ENCODE measurements at regions of chr12 and their contacts with region 1.

Region 1: GRCh38 chr12:65823513-65824375 is 539 bp upstream of the HMGA2 start:
- DNase-seq: peak; percentile 60
- H3K4me3 ChIP-seq: peak overlapping the region; percentile 58 to 97 (median 71)
- H3K27ac ChIP-seq: peak overlapping the region; percentile 71
- H3K4me1 ChIP-seq: peaks cover 31% of the 10 kb centered on the region
- H3K27me3 ChIP-seq: no peaks in the 10 kb centered on the region
- CTCF ChIP-seq: no peak
- POLR2A ChIP-seq: no peak

Region 2: GRCh38 chr12:65536876-65537661 is 286.7 kb before region 1 on chr12:
- CTCF ChIA-PET with region 1: no interaction called
- POLR2A ChIA-PET with region 1: no interaction called
- dilution Hi-C with region 1: no loop called
- intact Hi-C with region 1: loop called (anchors 2 kb)
- DNase-seq: peak; percentile 94
- H3K4me3 ChIP-seq: no peak overlapping the region
- H3K27ac ChIP-seq: peak overlapping the region; percentile 98
- H3K4me1 ChIP-seq: peaks cover 58% of the 10 kb centered on the region
- H3K27me3 ChIP-seq: no peaks in the 10 kb centered on the region
- CTCF ChIP-seq: no peak
- POLR2A ChIP-seq: peak; percentile 45

Region 3: GRCh38 chr12:65695113-65695865 is 128.5 kb before region 1 on chr12:
- CTCF ChIA-PET with region 1: no interaction called
- POLR2A ChIA-PET with region 1: no interaction called
- dilution Hi-C with region 1: no loop called
- intact Hi-C with region 1: loop called (anchors 2 kb)
- DNase-seq: peak; percentile 94
- H3K4me3 ChIP-seq: no peak overlapping the region
- H3K27ac ChIP-seq: peak overlapping the region; percentile 88
- H3K4me1 ChIP-seq: peaks cover 31% of the 10 kb centered on the region
- H3K27me3 ChIP-seq: no peaks in the 10 kb centered on the region
- CTCF ChIP-seq: no peak
- POLR2A ChIP-seq: peak; percentile 35

Region 4: DNA sequence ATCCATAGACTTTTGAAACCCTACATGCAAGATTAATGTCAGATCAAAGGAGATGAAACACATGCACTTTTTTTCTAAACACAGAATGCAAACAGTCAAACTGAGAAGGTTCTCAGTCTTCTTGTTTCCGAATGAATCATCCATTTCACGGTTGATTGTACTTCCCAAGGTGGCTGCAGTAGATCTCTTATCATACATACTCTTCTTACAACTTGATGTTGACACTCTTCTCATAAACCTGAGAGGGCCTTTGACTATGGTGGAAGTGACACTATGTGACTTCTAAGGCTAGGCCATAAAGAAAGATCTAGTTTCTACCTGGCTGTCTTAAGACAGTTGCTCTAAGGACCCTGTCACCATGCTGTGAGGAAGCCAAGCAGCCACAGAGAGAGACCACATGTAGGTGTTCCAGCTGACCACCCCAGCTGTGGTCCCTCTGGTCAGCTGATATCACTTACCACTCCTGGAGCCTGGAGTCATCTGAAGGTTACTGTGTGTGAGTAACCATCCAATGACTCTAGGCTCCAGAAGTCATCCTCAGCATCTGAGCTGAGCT is 66.7 kb before region 1 on chr12:
- CTCF ChIA-PET with region 1: no interaction called
- POLR2A ChIA-PET with region 1: no interaction called
- dilution Hi-C with region 1: no loop called
- intact Hi-C with region 1: no loop called
- DNase-seq: no peak
- H3K4me3 ChIP-seq: no peak overlapping the region
- H3K27ac ChIP-seq: no peak overlapping the region
- H3K4me1 ChIP-seq: no peaks in the 10 kb centered on the region
- H3K27me3 ChIP-seq: no peaks in the 10 kb centered on the region
- CTCF ChIP-seq: no peak
- POLR2A ChIP-seq: no peak

Region 5: DNA sequence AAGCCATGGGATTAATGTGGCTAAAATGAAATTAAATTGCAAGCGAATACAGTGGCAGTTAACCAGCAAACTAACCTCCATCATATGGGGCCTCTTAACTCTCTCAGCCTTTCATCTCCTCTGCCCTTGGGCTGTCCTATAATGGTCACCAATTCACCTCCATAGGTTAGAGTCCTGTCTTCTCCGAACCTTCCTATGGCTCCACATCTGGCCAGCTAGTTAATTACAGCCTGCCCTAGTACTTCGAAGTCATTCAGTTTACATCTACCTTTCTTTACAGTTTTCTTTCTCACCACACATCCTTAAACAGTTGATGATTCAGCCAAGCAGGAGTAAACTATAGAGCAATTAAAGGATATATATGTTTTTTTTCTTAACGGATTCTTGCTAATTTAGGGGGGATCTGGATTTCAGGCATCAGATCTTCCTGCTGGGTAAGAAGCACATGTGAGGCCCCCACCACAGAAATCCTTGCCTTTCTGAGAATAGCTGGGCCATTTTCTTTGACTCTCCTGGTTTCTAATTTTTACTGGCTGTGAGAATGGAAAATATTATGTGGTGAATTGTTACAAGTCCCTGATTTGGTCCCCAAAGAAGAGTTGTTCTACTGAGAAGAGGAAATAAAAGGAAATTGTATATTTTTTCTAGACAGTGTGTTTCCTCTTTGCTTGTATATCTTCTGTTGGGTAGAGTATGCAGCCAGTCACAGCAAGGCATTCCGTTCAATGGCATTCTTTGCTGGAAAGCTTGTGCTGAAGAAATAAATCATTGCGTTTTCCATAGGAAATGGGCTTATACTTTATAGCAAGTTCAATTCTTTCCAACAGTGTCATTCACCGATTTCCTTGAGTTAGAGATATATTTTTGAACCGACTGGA is 17.3 kb after region 1 on chr12:
- CTCF ChIA-PET with region 1: interaction called, 4 read pairs
- POLR2A ChIA-PET with region 1: no interaction called
- dilution Hi-C with region 1: no loop called
- intact Hi-C with region 1: loop called (anchors 1 kb)
- DNase-seq: peak; percentile 96
- H3K4me3 ChIP-seq: peak overlapping the region in 1 of 3 experiments; percentile 19
- H3K27ac ChIP-seq: peak overlapping the region; percentile 73
- H3K4me1 ChIP-seq: peaks cover 27% of the 10 kb centered on the region
- H3K27me3 ChIP-seq: no peaks in the 10 kb centered on the region
- CTCF ChIP-seq: no peak
- POLR2A ChIP-seq: no peak

Region 6: GRCh38 chr12:65948320-65949008 is 124.7 kb after region 1 on chr12:
- CTCF ChIA-PET with region 1: interaction called, 3 read pairs
- POLR2A ChIA-PET with region 1: no interaction called
- dilution Hi-C with region 1: no loop called
- intact Hi-C with region 1: loop called (anchors 1 kb)
- DNase-seq: peak; percentile 100
- H3K4me3 ChIP-seq: peak overlapping the region in 2 of 3 experiments; percentile 13 to 42
- H3K27ac ChIP-seq: peak overlapping the region; percentile 96
- H3K4me1 ChIP-seq: peaks cover 67% of the 10 kb centered on the region
- H3K27me3 ChIP-seq: no peaks in the 10 kb centered on the region
- CTCF ChIP-seq: no peak
- POLR2A ChIP-seq: no peak

Region 7: DNA sequence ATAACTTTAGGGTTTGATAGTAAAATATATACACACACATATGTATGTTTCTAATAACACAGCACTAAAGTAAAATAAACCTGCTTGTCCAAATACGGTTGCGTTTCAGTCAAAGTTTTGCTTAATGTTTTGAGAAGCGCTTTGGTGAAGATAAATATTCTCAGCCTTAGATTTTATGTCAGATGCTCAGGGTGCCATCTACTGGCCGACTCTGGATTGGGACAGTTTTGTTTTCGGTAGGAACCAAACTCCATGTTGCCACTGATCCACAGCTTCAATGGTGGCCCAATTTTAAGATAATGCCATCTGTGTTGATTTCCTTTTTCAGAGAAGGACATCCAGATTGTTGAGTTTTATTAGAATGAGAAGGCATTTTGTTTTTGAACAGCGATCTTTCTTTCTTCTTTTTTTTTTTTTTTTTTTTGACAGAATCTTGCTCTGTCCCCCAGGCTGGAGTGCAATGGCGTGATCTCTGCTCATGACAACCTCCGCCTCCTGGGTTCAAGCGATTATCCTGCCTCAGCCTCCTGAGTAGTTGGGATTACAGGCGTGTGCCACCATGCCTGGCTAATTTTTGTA is 263.7 kb after region 1 on chr12:
- CTCF ChIA-PET with region 1: no interaction called
- POLR2A ChIA-PET with region 1: no interaction called
- dilution Hi-C with region 1: no loop called
- intact Hi-C with region 1: loop called (anchors 2 kb)
- DNase-seq: peak; percentile 67
- H3K4me3 ChIP-seq: no peak overlapping the region
- H3K27ac ChIP-seq: no peak overlapping the region
- H3K4me1 ChIP-seq: peaks cover 2% of the 10 kb centered on the region
- H3K27me3 ChIP-seq: no peaks in the 10 kb centered on the region
- CTCF ChIP-seq: peak; percentile 65 to 76
- POLR2A ChIP-seq: no peak